ENCODE measurements at regions of chr18 and their contacts with region 1.

Region 1: DNA sequence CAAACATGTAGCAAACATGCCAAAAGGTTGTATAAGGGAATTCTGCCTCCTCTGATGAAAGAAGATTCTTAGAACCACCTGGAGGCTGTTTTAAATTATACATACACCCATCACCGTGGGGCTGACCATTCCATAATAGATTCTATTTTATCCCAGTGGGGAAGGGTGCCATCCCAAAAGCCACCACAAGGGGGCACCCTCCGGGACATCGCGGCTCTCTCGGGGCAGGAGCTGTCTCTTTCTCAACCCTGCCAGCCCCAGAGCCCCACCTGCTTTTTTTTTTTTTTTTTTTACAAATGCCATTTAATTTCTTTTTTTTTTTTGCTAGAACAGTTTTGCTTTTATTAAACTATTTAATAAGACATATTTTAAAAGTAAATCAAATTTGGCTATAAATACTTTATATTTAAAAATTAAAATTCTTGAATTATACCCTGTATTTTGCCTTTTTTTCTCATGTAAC is 8.6 kb upstream of the MTCL1 start:
- DNase-seq: peak; percentile 63 to 87
- H3K4me3 ChIP-seq: no peak overlapping the region
- H3K27ac ChIP-seq: no peak overlapping the region
- H3K4me1 ChIP-seq: no peaks in the 10 kb centered on the region
- H3K27me3 ChIP-seq: no peaks in the 10 kb centered on the region
- CTCF ChIP-seq: peak; percentile 79 to 90 (median 83)
- POLR2A ChIP-seq: no peak

Region 2: DNA sequence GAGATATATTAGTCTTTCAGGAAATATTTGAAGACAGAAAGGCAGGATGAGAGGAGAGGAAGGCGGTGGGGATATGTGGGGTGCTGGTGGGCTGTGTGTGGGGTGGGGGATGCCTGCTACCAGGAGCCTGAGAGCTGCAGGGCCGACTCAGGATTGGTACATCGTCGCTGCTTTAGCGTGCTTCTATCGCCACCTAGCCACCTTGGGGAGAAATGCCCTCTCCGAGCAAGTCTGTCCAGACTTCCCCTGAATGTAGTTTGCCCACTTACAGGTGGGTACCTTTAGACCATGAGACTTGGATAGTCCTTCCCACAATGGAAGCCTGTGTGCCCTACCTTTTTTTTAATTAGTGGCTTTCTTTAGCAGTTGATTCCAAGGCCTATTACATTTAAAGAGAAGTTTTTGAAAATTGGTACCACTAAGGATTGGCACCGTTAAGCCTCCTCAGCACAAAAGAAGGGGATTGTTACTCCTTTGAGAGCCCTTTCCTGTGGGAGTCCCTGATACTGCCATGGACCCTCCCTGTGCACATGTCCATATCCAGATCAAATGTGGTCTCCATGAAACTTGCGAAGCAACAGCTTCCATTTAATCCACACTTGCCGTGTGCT is 291.6 kb after region 1 on chr18:
- intact Hi-C with region 1: loop called (anchors 10 kb)
- DNase-seq: no peak
- H3K4me3 ChIP-seq: no peak overlapping the region
- H3K27ac ChIP-seq: no peak overlapping the region
- H3K4me1 ChIP-seq: no peaks in the 10 kb centered on the region
- H3K27me3 ChIP-seq: no peaks in the 10 kb centered on the region
- CTCF ChIP-seq: peak in 2 of 3 donors; percentile 47 to 56
- POLR2A ChIP-seq: no peak